ENCODE measurements at regions of chr1 and their contacts with region 1.

Region 1: DNA sequence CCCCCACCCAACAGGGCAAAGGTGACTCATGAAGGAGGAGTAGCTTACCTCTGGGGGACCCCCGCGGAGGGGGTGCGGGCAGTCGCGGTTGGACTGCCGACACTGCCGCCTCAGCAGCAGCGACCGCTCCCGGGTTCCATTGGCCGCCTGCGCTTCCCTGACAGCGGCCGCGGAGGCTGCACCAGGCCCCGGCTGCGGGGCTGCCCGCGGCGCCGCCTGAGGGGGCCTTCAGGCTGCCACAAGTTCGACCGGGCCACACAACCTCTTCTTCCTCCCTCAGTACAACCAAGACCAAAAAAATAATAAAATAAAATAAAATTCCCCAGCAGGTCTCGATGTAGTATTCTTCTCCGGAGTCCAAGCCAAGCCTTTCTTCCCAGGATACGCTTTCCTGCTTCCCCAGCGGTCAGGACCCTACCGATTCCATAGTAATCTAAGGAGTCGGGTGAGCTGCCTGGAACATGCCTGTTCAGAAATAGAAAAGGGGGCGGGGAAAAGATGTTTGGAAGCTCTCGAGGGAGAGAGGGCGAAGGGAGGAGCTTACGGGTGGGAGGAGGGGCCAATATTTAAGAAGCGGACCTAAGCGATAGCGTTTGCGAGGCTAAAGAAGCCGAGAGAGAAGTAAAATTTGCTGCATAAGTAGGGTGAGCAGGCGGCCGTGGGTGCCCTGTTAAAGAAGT is at the start of gene PI4KB:
- DNase-seq: peak; percentile 79 to 97
- ATAC-seq: peak; percentile 90 to 97 (median 92)
- H3K4me3 ChIP-seq: peak within 1 kb of the TSS; percentile 74
- H3K4me3 Mint-ChIP-seq: peak within 1 kb of the TSS; percentile 95
- H3K27ac ChIP-seq: peak within 1 kb of the TSS; percentile 94
- H3K27ac Mint-ChIP-seq: peak within 1 kb of the TSS; percentile 95 to 97
- H3K4me1 ChIP-seq: peaks cover 20% of the 10 kb centered on the region
- H3K4me1 Mint-ChIP-seq: peaks cover 30 to 42% of the 10 kb centered on the region in 2 donors
- H3K27me3 ChIP-seq: no peaks in the 10 kb centered on the region
- H3K27me3 Mint-ChIP-seq: no peaks in the 10 kb centered on the region
- CTCF ChIP-seq: no peak
- total RNA-seq, gene PI4KB: 68.2 to 99.3 (median 95.0) TPM

Region 2: DNA sequence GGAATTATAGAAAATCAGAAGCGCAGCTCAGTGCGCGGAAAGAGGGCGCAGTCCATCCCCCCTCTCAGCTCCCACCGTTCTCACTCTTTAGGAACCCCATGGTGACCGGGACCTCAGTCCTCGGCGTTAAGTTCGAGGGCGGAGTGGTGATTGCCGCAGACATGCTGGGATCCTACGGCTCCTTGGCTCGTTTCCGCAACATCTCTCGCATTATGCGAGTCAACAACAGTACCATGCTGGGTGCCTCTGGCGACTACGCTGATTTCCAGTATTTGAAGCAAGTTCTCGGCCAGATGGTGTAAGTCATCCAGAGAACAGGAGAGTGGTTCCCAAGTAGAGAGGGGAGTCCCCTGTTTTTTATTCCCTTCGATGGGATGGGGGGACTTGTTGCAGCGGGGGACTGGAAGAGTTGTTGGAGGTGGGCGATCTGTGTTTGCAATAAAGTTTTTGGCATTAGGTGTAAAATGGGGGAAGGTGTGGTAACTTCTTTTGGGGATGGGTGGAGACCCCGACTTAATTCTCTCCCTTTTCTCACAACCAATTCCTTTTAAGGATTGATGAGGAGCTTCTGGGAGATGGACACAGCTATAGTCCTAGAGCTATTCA is 72.6 kb after region 1 on chr1:
- intact Hi-C with region 1: loop called (anchors 1 kb)
- DNase-seq: peak in 1 of 2 donors; percentile 44
- ATAC-seq: peak; percentile 16 to 29 (median 21)
- H3K4me3 ChIP-seq: peak overlapping the region; percentile 90
- H3K4me3 Mint-ChIP-seq: peak overlapping the region; percentile 99
- H3K27ac ChIP-seq: peak overlapping the region; percentile 96
- H3K27ac Mint-ChIP-seq: peak overlapping the region; percentile 99 to 100
- H3K4me1 ChIP-seq: peaks cover 17% of the 10 kb centered on the region
- H3K4me1 Mint-ChIP-seq: peaks cover 20 to 21% of the 10 kb centered on the region in 2 donors
- H3K27me3 ChIP-seq: no peaks in the 10 kb centered on the region
- H3K27me3 Mint-ChIP-seq: no peaks in the 10 kb centered on the region
- CTCF ChIP-seq: no peak

Measured in natural killer cell (primary cell).